Activated CD4-positive, alpha-beta memory T cell treated with anti-CD3 and anti-CD28 coated beads for 36 hours (primary cell): ENCODE measurements at regions of chrX and their contacts with region 1.

Region 1: DNA sequence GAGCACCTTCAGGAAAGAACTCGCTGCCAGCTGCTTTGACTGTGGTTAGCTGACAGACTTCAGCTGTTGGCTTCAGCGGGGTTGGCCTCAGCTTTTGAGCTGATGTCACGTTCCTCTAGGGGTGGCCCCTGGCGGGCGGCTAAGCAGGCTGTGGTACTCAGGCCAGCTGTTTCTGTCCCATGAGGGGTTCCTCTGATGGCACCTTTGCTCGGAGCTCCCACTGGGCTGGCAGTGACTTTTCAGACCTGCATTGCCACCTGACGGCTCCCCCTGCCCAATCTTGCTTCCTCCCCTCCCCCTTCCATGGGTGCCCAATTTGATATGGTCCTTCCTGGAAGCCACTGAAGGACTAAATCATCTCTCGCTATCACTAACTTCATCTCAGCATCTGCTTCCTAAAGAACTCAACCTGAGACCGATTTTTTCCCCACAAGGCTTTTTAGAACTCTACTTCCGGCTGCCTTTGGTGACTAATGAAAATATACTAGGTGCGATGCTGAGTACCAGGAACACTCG is 519.3 kb downstream of the BCOR start:
- DNase-seq: peak; percentile 84
- H3K4me3 Mint-ChIP-seq: peak overlapping the region; percentile 16
- H3K27ac Mint-ChIP-seq: peak overlapping the region; percentile 91
- H3K4me1 Mint-ChIP-seq: peaks cover 23% of the 10 kb centered on the region
- H3K27me3 Mint-ChIP-seq: no peaks in the 10 kb centered on the region

Region 2: GRCh38 chrX:39439906-39440798 is 138.3 kb before region 1 on chrX:
- CTCF ChIA-PET with region 1: no interaction called
- POLR2A ChIA-PET with region 1: no interaction called
- intact Hi-C with region 1: loop called (anchors 2 kb)
- DNase-seq: peak; percentile 53
- H3K4me3 Mint-ChIP-seq: peak overlapping the region; percentile 46
- H3K27ac Mint-ChIP-seq: peak overlapping the region; percentile 93
- H3K4me1 Mint-ChIP-seq: peaks cover 40% of the 10 kb centered on the region
- H3K27me3 Mint-ChIP-seq: no peaks in the 10 kb centered on the region

Region 3: GRCh38 chrX:39736216-39737211 is 158.1 kb after region 1 on chrX:
- CTCF ChIA-PET with region 1: no interaction called
- POLR2A ChIA-PET with region 1: no interaction called
- intact Hi-C with region 1: no loop called
- DNase-seq: peak; percentile 32
- H3K4me3 Mint-ChIP-seq: no peak overlapping the region
- H3K27ac Mint-ChIP-seq: no peak overlapping the region
- H3K4me1 Mint-ChIP-seq: peaks cover 5% of the 10 kb centered on the region
- H3K27me3 Mint-ChIP-seq: no peaks in the 10 kb centered on the region